Activated CD4-positive, alpha-beta memory T cell treated with anti-CD3 and anti-CD28 coated beads for 36 hours (primary cell): ENCODE measurements at regions of chr15 and their contacts with region 1.

Region 1: GRCh38 chr15:67762610-67763368 is 62.5 kb upstream of the SKOR1 start:
- DNase-seq: peak; percentile 77
- H3K4me3 Mint-ChIP-seq: no peak overlapping the region
- H3K27ac Mint-ChIP-seq: peak overlapping the region; percentile 20
- H3K4me1 Mint-ChIP-seq: peaks cover 46% of the 10 kb centered on the region
- H3K27me3 Mint-ChIP-seq: no peaks in the 10 kb centered on the region

Region 2: DNA sequence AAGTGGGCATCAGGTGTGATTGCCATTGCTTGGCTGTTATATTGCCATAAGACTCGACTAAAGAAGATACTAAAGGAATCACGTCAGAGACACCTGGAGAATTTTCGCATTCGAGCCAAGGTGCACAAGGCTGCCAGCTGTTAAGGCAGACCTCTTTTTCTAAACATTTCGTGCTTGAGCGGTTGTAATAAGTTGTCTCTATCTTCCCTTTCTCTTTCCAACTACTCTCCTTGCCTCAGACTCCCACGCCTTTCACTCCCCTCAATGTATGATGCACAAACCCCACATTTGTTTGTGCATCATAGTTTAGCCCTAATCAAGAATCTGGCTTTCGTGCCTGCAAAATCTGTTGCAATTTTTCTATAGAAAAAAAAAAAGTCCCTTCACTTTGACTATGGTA is 390.2 kb before region 1 on chr15:
- CTCF ChIA-PET with region 1: no interaction called
- POLR2A ChIA-PET with region 1: no interaction called
- intact Hi-C with region 1: no loop called
- DNase-seq: no peak
- H3K4me3 Mint-ChIP-seq: no peak overlapping the region
- H3K27ac Mint-ChIP-seq: no peak overlapping the region
- H3K4me1 Mint-ChIP-seq: no peaks in the 10 kb centered on the region
- H3K27me3 Mint-ChIP-seq: peaks cover 5% of the 10 kb centered on the region

Region 3: GRCh38 chr15:67422296-67422695 is 340.5 kb before region 1 on chr15:
- CTCF ChIA-PET with region 1: no interaction called
- POLR2A ChIA-PET with region 1: no interaction called
- intact Hi-C with region 1: no loop called
- DNase-seq: no peak
- H3K4me3 Mint-ChIP-seq: no peak overlapping the region
- H3K27ac Mint-ChIP-seq: no peak overlapping the region
- H3K4me1 Mint-ChIP-seq: no peaks in the 10 kb centered on the region
- H3K27me3 Mint-ChIP-seq: no peaks in the 10 kb centered on the region

Region 4: GRCh38 chr15:67531379-67532059 is 231.3 kb before region 1 on chr15:
- CTCF ChIA-PET with region 1: no interaction called
- POLR2A ChIA-PET with region 1: no interaction called
- intact Hi-C with region 1: loop called (anchors 10 kb)
- DNase-seq: no peak
- H3K4me3 Mint-ChIP-seq: no peak overlapping the region
- H3K27ac Mint-ChIP-seq: no peak overlapping the region
- H3K4me1 Mint-ChIP-seq: peaks cover 16% of the 10 kb centered on the region
- H3K27me3 Mint-ChIP-seq: no peaks in the 10 kb centered on the region

Region 5: DNA sequence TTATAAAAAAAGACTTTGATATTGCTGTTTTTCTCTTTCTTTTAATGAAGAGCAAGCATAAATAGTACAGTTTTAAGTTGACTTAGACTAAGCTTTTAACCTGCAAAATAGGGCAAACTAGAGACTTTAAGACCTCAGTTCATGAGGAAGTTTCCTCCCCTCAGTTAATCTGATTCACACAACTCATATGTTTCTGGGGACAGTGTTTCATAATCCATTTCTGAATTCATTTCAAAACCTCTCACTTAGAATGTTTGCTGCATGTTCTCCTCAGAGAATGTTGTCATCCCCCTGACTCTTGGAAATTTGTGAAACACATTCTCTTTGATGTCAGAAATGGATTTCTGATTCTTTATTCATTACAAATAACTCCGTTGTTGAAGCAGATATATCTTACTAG is 16.8 kb before region 1 on chr15:
- CTCF ChIA-PET with region 1: no interaction called
- POLR2A ChIA-PET with region 1: no interaction called
- intact Hi-C with region 1: loop called (anchors 2 kb)
- DNase-seq: no peak
- H3K4me3 Mint-ChIP-seq: no peak overlapping the region
- H3K27ac Mint-ChIP-seq: peak overlapping the region; percentile 16
- H3K4me1 Mint-ChIP-seq: peaks cover 41% of the 10 kb centered on the region
- H3K27me3 Mint-ChIP-seq: no peaks in the 10 kb centered on the region

Region 6: GRCh38 chr15:67820992-67821783 is 58.4 kb after region 1 on chr15:
- CTCF ChIA-PET with region 1: no interaction called
- POLR2A ChIA-PET with region 1: no interaction called
- intact Hi-C with region 1: loop called (anchors 5 kb)
- DNase-seq: peak; percentile 52
- H3K4me3 Mint-ChIP-seq: no peak overlapping the region
- H3K27ac Mint-ChIP-seq: no peak overlapping the region
- H3K4me1 Mint-ChIP-seq: peaks cover 34% of the 10 kb centered on the region
- H3K27me3 Mint-ChIP-seq: peaks cover 81% of the 10 kb centered on the region

Region 7: GRCh38 chr15:67915461-67916374 is 152.9 kb after region 1 on chr15:
- CTCF ChIA-PET with region 1: no interaction called
- POLR2A ChIA-PET with region 1: no interaction called
- intact Hi-C with region 1: no loop called
- DNase-seq: no peak
- H3K4me3 Mint-ChIP-seq: no peak overlapping the region
- H3K27ac Mint-ChIP-seq: no peak overlapping the region
- H3K4me1 Mint-ChIP-seq: no peaks in the 10 kb centered on the region
- H3K27me3 Mint-ChIP-seq: no peaks in the 10 kb centered on the region